ENCODE measurements at regions of chr6 and their contacts with region 1.

Region 1: DNA sequence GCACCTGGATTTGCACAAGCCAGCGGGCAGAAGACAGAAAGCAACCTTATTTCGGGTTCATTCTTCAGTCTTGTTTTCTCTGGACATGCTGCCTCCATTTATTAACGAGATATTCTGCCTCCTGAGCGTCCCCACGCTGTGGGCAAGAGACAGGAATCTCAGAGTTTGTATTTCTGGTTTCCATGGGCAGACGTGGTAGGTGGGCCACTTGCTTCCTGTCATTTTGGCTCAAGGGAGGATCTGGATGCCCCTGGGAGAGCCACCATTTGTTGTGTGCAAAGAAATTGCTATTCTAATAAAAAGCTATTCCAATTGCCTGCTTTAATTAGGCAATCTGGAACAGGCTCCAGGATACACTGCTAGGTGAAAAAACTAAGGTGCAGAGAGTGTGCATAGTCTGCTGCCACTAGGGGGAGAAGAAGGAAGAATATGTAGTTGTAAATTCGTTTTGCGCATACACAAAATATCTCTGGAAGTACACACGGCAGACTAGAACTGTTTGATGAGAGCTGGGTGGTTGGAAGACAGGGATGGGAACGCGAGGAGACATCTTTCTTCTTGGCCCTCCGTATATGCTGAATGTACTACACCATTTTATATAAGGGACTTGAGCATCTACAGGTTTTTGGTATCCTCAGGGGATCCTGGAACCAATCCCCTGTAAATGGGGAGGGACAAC is 30.1 kb upstream of the SLC16A10 start:
- DNase-seq: no peak
- H3K4me3 ChIP-seq: no peak overlapping the region
- CTCF ChIP-seq: peak; percentile 66

Region 2: GRCh38 chr6:110890288-110890687 is 166.9 kb before region 1 on chr6:
- CTCF ChIA-PET with region 1: no interaction called
- POLR2A ChIA-PET with region 1: no interaction called
- DNase-seq: no peak
- H3K4me3 ChIP-seq: no peak overlapping the region
- CTCF ChIP-seq: no peak

Region 3: GRCh38 chr6:111030008-111031007 is 26.9 kb before region 1 on chr6:
- CTCF ChIA-PET with region 1: interaction called, 16 read pairs
- POLR2A ChIA-PET with region 1: no interaction called
- DNase-seq: no peak
- H3K4me3 ChIP-seq: no peak overlapping the region
- CTCF ChIP-seq: no peak

Region 4: DNA sequence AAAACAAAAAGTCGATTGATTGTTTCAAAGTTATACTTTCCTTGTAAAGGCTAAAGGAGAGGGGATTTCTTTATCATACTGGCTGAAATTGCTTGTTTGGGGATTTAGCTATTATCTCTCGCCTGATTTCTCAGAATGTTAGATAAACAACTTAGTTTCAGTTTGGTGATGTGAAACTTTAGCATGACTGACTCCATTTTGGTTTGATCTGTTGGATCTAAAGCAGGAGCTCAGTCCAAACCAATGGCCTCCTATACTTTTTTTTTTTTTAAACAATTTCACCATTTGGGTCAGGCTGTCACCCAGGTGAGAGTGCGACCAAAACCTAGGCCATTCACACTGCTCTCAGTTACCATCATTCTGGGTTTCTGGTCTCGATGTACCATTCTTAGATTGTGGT is 15.3 kb before region 1 on chr6:
- CTCF ChIA-PET with region 1: interaction called, 19 read pairs
- POLR2A ChIA-PET with region 1: no interaction called
- DNase-seq: no peak
- H3K4me3 ChIP-seq: no peak overlapping the region
- CTCF ChIP-seq: no peak

Region 5: DNA sequence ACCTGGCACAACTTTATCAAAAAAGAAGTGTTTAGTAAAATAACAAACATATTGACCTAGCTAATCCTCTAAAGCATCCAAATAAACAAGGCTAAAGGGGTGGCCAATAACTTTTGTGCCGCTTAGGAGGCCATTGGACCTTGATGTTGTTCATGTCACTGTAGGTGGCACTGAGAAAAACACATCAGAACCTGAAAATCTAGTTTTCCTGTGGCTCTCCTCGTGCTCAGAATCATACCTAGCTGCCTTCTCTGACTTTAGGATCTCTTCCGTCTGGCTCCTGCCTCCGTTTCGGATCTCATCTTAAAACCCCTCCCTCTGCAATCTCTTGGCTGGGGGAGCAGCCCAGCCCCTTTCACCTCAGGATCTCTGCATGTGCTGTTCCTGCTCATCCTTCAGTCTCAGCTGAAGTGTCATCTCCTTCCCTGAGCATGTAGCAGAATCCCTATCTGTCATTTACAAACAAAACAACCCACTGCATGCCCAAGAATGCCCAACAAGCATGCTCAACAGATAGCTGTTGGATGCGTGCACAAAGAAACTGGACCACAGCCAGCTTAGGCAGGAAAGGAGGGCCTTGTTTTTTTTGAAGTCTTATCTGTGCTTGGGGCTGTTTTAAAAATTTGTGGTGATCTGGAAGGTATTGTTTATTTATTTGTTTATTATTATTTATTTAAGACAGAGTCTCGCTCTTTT is 11.4 kb after region 1 on chr6:
- CTCF ChIA-PET with region 1: interaction called, 21 read pairs
- POLR2A ChIA-PET with region 1: no interaction called
- DNase-seq: no peak
- H3K4me3 ChIP-seq: no peak overlapping the region
- CTCF ChIP-seq: no peak

Region 6: DNA sequence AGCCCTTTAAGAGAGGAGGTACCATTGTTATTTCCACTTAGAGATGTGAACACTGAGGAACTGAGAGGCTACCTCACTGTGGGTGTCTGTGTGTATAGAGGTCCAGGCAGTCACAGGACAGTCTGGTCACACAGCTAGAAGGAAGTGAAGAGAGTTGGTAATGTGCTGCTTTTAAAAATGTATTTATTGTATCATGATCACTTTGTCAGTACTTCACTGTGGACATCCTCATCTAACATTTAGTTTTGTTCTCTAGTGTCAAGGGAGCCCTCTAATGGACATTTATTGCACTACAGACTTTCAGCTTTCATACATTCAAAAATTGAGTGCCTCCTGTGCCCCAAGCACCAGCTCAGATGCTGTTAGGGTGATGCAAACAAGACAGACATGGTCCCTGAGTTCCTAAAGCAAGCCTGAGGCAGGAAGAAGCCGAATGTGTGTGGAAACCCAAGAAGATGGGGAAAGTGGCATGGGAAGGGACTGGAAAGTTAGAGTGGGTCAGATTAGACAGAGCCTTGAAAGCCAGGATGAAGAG is 153.0 kb after region 1 on chr6:
- CTCF ChIA-PET with region 1: interaction called, 41 read pairs
- POLR2A ChIA-PET with region 1: no interaction called
- DNase-seq: no peak
- H3K4me3 ChIP-seq: no peak overlapping the region
- CTCF ChIP-seq: peak; percentile 56

Region 7: DNA sequence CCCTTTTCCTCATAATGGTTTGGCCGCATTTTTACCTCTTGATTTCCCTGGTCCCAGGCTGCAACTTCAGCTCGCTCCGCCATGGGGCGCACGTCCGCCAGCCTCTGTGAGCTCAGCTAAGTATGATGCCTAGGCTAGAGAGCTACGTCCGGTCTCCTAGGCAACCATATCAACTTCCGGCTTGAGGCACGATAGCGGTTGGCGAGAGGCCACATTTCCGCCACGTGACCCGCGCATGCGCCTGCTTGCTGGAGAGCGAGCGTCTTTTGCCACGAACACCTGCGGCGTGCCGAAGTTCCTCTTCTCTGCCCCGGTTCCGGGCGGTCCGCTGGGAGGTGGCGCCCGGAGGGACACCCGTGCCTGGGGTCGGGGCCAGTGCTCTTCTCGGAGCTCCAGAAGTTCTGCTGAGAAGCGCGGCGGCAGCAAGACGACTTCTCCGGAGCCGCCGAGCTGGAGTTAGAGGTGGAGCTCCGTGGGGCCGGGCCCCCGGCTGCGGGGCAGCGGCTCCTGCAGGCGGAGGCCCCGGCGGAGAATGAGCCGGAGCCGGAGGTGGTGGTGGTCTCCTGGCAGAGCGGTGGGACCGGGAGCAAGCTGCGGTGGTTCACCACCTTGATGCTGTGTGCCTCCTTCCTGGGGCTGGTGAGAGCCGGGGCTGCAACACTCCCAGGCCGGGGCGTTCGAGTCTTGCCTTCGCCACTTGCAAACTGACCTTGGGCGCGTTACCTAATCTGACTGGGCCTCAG is 202.0 kb after region 1 on chr6:
- CTCF ChIA-PET with region 1: interaction called, 18 read pairs
- POLR2A ChIA-PET with region 1: no interaction called
- DNase-seq: peak; percentile 94
- H3K4me3 ChIP-seq: peak overlapping the region; percentile 85
- CTCF ChIP-seq: peak; percentile 87

Measured in AG04449 (cell line).